Endothelial cell of umbilical vein (primary cell): ENCODE measurements at regions of chr1 and their contacts with region 1.

Region 1: DNA sequence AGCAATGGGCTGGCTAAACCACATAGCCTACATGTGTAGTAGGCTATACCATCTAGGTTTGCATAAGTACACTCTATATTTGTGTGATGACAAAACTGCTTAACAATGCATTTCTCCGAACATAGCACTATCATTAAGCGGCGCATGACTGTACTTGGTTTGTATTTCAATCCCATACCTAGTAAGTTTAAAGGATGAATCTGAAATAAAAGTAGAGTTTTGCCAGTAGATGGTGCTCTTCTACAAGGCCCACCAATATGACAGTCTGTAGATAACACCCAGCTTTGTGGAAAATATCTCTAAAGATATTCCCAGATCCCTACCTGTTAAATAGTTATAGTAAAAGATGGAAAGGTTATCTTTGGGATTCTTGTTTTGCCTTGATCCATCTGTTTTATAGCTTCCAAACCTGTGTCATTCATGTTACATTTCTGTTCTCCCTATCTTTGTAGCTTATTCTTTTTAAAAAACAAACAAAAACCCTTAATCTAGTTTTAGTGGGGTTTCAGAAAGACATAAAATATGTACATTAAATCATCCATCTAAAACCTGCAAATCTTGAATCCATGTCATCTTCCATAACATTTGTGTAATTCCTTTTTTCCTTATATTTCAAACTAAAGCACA is 33.9 kb upstream of the ASPM start:
- DNase-seq: peak; percentile 46
- H3K4me3 ChIP-seq: no peak overlapping the region
- H3K27ac ChIP-seq: no peak overlapping the region
- H3K4me1 ChIP-seq: peaks cover 6% of the 10 kb centered on the region
- H3K27me3 ChIP-seq: no peaks in the 10 kb centered on the region
- CTCF ChIP-seq: peak; percentile 32 to 47
- POLR2A ChIP-seq: no peak

Region 2: GRCh38 chr1:197156691-197157090 is 23.7 kb before region 1 on chr1:
- CTCF ChIA-PET with region 1: interaction called, 17 read pairs
- POLR2A ChIA-PET with region 1: no interaction called
- dilution Hi-C with region 1: no loop called
- intact Hi-C with region 1: no loop called
- DNase-seq: no peak
- H3K4me3 ChIP-seq: no peak overlapping the region
- H3K27ac ChIP-seq: no peak overlapping the region
- H3K4me1 ChIP-seq: no peaks in the 10 kb centered on the region
- H3K27me3 ChIP-seq: no peaks in the 10 kb centered on the region
- CTCF ChIP-seq: no peak
- POLR2A ChIP-seq: no peak

Region 3: DNA sequence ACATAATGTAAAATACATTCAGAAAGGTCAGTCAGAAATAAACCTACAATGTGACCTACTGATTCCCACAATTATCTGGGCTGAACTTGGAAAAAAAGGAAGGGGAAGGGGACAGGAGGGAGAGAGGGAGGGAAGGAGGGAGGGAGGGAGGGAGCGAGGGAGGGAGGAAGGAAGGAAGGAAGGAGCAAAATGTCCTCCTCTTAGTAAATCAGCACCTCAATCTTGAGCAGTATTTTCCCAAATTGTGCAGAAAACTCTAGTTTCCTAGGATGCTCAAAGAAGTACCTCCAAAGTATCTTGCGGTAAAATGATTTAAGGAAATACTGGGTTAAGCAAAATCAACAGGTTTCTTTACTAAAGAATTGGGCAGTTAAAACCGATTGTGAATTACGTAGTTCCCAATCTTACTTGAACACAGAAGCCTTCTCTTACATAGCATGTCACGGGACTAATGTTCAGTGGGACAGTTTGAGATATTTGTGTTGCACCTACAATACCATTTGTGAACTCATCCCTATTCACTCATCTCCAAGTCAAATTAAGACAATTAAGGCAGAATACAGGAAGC is 17.1 kb after region 1 on chr1:
- CTCF ChIA-PET with region 1: interaction called, 10 read pairs
- POLR2A ChIA-PET with region 1: no interaction called
- dilution Hi-C with region 1: no loop called
- intact Hi-C with region 1: no loop called
- DNase-seq: no peak
- H3K4me3 ChIP-seq: peak overlapping the region in 1 of 3 experiments; percentile 0
- H3K27ac ChIP-seq: no peak overlapping the region
- H3K4me1 ChIP-seq: peaks cover 27% of the 10 kb centered on the region
- H3K27me3 ChIP-seq: no peaks in the 10 kb centered on the region
- CTCF ChIP-seq: no peak
- POLR2A ChIP-seq: no peak

Region 4: GRCh38 chr1:197224160-197224559 is 43.8 kb after region 1 on chr1:
- CTCF ChIA-PET with region 1: interaction called, 13 read pairs
- POLR2A ChIA-PET with region 1: no interaction called
- dilution Hi-C with region 1: no loop called
- intact Hi-C with region 1: no loop called
- DNase-seq: no peak
- H3K4me3 ChIP-seq: no peak overlapping the region
- H3K27ac ChIP-seq: no peak overlapping the region
- H3K4me1 ChIP-seq: no peaks in the 10 kb centered on the region
- H3K27me3 ChIP-seq: no peaks in the 10 kb centered on the region
- CTCF ChIP-seq: no peak
- POLR2A ChIP-seq: no peak

Region 5: DNA sequence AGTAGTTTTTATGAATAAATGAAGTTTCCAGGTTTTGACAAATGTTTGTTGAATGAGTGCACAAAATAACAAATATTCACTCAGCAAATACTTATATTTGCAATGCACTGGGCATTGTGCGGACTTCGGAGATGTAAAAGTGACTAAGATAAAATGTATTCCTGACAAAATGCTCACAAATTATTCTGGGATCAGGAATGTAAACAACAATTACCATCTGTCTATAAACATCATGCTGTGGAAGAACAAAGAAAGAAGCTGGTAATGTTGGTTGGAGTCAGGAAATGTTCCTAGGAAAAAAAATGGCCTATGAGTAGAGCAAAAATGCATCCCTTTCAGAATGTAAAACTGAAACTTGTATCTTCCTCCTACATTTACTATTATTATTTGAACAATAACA is 156.2 kb after region 1 on chr1:
- CTCF ChIA-PET with region 1: interaction called, 12 read pairs
- POLR2A ChIA-PET with region 1: no interaction called
- dilution Hi-C with region 1: no loop called
- intact Hi-C with region 1: loop called (anchors 1 kb)
- DNase-seq: no peak
- H3K4me3 ChIP-seq: no peak overlapping the region
- H3K27ac ChIP-seq: no peak overlapping the region
- H3K4me1 ChIP-seq: no peaks in the 10 kb centered on the region
- H3K27me3 ChIP-seq: no peaks in the 10 kb centered on the region
- CTCF ChIP-seq: no peak
- POLR2A ChIP-seq: no peak

Region 6: DNA sequence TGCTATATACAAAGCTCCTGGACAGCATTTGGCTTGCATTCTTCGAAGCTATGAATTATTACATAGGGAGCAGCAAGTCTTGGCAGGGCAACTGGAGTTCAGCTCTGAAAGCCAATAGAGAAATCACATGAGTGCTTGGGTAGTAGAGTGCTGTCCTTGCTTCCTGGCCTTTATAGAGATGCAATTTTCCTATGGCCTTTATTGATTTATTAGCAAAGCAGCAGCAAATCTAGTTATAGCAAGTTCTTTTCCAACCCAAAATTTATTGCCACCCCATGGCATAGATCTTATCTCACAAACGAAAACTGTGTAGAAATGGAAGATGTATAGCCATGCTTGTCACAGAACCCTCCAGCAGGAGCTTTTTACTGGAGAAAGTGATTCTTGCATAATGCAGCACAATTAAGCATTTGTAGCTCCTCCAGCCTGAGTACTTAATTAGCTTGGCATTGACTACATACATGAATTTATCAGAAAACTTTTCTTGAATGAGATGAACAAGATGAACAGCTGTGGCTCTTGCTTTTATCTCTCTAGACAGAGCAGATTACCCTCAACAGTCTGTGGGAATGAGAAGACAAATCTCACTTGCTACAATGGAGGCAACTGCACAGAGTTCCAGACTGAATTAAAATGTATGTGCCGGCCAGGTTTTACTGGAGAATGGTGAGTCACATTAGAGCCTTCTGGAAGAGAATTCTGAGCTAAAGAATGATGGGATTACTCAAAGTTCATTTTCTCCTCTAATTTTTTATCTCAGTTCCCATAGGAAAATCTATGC is 257.8 kb after region 1 on chr1:
- CTCF ChIA-PET with region 1: no interaction called
- POLR2A ChIA-PET with region 1: no interaction called
- dilution Hi-C with region 1: no loop called
- intact Hi-C with region 1: no loop called
- DNase-seq: no peak
- H3K4me3 ChIP-seq: no peak overlapping the region
- H3K27ac ChIP-seq: no peak overlapping the region
- H3K4me1 ChIP-seq: no peaks in the 10 kb centered on the region
- H3K27me3 ChIP-seq: no peaks in the 10 kb centered on the region
- CTCF ChIP-seq: no peak
- POLR2A ChIP-seq: no peak